ENCODE measurements at regions of chr7 and their contacts with region 1.

Region 1: DNA sequence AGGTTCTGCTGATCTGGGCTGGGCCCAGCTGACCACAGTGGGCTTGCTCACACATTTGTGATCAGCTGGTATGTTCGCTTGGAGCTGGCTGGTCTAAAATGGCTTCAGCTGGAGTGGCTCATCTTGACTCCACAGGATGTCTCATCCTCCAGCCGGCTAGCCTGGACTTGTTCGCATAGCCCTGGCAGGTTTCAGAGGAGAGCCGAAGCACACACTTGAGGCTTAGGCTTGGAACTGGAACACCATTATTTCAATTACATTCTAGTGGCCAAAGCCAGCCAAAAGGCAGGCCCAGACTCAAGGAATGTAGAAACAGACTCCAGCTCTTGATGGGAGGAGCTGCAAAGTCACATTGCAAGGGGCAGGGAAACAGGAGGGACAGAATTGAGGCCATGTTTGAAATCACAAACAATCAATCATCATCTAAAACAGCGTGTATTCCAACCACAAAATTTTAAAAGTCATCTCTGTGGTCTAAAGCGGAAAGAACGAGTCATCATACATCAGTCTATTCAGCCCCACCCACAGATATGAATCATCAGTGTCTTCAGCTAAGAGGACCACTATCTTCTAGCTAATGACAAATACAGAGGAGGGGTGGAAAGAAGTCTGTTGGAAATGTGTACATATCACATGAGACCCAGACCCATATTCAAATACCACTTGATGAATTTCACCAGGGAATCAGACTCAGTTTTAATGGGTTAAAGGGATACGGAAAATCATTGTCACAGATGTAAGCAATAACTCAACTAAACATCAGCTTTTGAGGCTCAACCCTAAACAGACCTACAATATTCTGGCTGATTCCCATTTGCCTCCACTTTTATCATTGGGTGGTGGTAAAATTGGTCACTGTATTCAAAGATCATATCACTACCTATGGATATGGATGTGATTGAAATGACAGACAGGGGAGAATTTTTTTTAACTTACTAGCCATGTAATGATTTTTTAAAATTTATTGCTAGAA is 139.0 kb upstream of the MKLN1 start:
- DNase-seq: peak; percentile 96
- ATAC-seq: peak; percentile 76
- H3K4me3 ChIP-seq: 0 out of 2 replicates have a peak overlapping the region, but pooled peaks have one; percentile 6
- H3K27ac ChIP-seq: peak overlapping the region; percentile 93
- H3K4me1 ChIP-seq: peaks cover 51% of the 10 kb centered on the region
- H3K27me3 ChIP-seq: no peaks in the 10 kb centered on the region
- CTCF ChIP-seq: no peak

Region 2: GRCh38 chr7:130961128-130961601 is 227.5 kb before region 1 on chr7:
- CTCF ChIA-PET with region 1: no interaction called
- POLR2A ChIA-PET with region 1: no interaction called
- intact Hi-C with region 1: no loop called
- DNase-seq: no peak
- ATAC-seq: peak; percentile 16
- H3K4me3 ChIP-seq: peak overlapping the region; percentile 36; the same call in 1 of the 2 replicates
- H3K27ac ChIP-seq: peak overlapping the region; percentile 89
- H3K4me1 ChIP-seq: peaks cover 19% of the 10 kb centered on the region
- H3K27me3 ChIP-seq: no peaks in the 10 kb centered on the region
- CTCF ChIP-seq: no peak

Region 3: DNA sequence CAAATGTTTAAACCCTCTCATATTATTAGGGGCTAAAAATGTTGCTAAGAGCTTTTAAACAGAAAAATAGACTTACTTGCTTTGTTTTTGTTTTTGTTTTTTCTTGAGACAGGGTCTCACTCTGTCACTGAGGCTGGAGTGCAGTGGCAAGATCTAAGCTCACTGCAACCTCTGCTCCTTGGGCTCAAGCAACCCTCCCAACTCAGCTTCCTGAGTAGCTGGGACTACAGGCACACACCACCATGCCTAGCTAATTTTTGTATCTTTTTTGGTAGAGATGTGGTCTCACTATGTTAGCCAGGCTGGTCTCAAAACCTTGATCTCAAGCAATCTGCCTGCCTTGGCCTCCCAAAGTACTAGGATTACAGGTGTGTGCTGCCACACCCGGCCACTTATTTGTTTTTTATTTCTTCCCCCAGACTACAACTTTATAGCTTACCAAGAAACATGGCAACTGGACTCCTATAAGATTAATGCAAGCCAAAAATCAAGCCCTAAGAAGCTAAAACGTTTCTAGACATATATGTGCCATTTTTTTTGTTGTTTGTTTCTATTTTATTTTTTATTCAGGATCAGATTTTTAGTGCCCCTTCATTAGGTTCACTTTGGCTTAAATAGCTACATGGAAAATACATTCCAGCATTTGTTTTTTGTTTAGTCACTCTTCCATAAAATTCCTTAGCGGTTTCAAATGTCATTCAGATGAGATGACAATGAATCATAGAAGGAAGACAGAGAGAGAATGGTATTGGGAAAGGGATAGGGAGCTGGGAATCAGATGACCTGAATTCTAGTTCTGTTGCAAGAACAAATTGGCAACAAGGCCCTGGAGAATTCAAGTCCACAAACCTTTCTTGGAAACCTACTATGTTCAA is 24.4 kb before region 1 on chr7:
- CTCF ChIA-PET with region 1: interaction called, 9 read pairs
- POLR2A ChIA-PET with region 1: no interaction called
- intact Hi-C with region 1: loop called (anchors 2 kb)
- DNase-seq: peak; percentile 91
- ATAC-seq: peak; percentile 91
- H3K4me3 ChIP-seq: peak overlapping the region; percentile 34; the same call in 1 of the 2 replicates
- H3K27ac ChIP-seq: peak overlapping the region; percentile 84
- H3K4me1 ChIP-seq: peaks cover 37% of the 10 kb centered on the region
- H3K27me3 ChIP-seq: no peaks in the 10 kb centered on the region
- CTCF ChIP-seq: no peak

Region 4: GRCh38 chr7:131235489-131236317 is 47.0 kb after region 1 on chr7:
- CTCF ChIA-PET with region 1: no interaction called
- POLR2A ChIA-PET with region 1: no interaction called
- intact Hi-C with region 1: loop called (anchors 5 kb)
- DNase-seq: peak; percentile 93
- ATAC-seq: peak; percentile 98
- H3K4me3 ChIP-seq: no peak overlapping the region
- H3K27ac ChIP-seq: peak overlapping the region; percentile 89
- H3K4me1 ChIP-seq: peaks cover 24% of the 10 kb centered on the region
- H3K27me3 ChIP-seq: no peaks in the 10 kb centered on the region
- CTCF ChIP-seq: no peak

Region 5: DNA sequence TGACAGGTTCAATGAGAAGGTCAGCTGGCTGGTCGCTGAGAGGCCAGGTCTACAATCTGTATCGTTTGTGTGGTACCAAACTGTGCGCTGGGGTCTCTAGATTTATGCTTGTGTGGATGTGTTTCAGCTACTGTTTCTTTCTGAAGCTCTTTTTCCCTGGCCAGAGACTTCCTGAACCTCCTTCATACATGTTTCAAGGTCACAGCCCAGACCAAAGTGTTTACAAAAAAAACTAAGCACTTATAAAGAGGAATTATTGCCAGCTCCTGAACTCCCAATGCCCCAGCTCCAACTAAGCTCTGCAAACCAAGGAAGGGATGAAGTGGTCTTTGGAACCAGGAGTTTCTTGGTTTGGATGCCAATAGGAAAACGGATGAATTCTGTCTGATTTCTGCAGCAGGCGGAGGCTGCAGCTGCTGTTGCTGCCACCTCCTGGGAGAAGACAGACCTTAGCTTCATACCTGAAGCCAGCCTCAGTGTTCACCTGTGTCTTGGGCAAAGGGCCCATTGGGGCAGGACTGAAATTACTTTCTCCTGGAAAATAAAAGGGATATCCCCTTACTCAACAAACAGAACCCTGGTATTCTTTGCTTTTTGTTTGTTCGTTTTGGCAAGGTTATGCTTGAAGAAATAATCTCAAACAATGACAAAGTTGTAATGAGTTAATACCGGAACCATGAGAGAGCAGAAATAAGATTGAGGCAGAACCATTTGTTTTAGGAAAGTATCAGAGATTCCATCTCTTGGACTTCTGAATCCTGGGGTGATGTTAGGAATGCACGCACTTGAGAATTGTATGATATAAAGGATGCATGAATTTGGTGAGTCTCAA is 114.4 kb after region 1 on chr7:
- CTCF ChIA-PET with region 1: no interaction called
- POLR2A ChIA-PET with region 1: no interaction called
- intact Hi-C with region 1: loop called (anchors 5 kb)
- DNase-seq: peak; percentile 65
- ATAC-seq: peak; percentile 88
- H3K4me3 ChIP-seq: no peak overlapping the region
- H3K27ac ChIP-seq: no peak overlapping the region
- H3K4me1 ChIP-seq: no peaks in the 10 kb centered on the region
- H3K27me3 ChIP-seq: no peaks in the 10 kb centered on the region
- CTCF ChIP-seq: peak; percentile 84

Region 6: DNA sequence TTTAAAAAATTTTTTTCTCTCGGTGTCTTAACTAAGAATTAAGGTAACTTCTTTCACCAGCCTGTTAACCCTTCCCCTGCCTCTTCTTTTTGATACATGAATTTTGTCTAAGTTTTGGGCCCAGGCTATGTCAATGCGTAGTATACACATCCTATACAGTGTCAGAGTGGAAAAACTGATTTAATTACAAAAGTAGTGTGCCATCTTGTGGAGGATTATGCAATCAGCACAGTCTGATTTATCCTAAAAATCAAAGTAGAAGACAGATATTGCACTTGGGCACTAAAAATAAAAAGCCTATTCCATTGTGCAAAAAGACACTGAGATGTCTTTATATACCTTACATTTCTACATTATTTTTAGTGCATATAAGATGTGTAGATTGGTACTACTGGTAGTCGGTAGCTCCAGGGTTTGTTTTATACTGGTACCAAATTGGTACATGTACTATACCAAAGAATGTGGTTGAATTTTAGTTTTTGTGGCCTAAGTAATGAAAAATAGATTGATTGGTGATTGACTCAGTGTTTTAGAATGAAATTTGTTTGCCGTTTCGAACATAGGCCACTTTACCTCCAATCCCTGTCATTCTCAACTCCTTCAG is 235.7 kb after region 1 on chr7:
- CTCF ChIA-PET with region 1: no interaction called
- POLR2A ChIA-PET with region 1: no interaction called
- intact Hi-C with region 1: loop called (anchors 10 kb)
- DNase-seq: peak; percentile 57
- ATAC-seq: peak; percentile 96
- H3K4me3 ChIP-seq: no peak overlapping the region
- H3K27ac ChIP-seq: no peak overlapping the region
- H3K4me1 ChIP-seq: no peaks in the 10 kb centered on the region
- H3K27me3 ChIP-seq: no peaks in the 10 kb centered on the region
- CTCF ChIP-seq: peak; percentile 78

Measured in PC-3 (cell line).